ENCODE measurements at regions of chr19 and their contacts with region 1.

Region 1: GRCh38 chr19:37893845-37894575 is 12.4 kb downstream of the WDR87 start:
- DNase-seq: no peak
- ATAC-seq: no peak

Region 2: DNA sequence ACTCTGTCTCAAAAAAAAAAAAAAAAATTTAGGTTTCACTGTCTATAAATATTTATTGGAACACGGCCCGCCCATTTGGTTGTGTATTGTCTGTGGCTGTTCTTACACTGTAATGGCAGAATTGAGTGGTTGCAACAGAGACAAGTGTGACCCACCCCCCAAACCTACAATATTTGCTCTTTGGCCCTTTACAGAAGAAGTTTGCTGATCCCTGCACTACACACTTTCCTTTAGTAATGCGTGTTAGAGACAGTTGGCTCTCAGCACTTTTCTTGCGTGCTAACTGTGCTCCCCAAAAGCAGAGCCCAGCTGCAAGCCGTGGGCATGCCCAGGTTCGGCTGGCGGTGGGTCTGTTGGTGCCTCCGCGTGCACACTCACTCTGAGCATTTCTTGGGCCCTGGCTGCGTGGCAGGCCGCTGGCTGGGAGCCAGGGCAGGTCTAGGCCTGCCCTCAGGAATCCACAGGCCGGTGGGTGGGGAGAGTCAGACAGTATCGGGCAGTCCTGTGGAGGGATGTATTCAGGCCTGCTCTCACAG is 85.6 kb after region 1 on chr19:
- intact Hi-C with region 1: no loop called
- DNase-seq: no peak
- ATAC-seq: peak in 1 of 2 donors; percentile 67

Region 3: DNA sequence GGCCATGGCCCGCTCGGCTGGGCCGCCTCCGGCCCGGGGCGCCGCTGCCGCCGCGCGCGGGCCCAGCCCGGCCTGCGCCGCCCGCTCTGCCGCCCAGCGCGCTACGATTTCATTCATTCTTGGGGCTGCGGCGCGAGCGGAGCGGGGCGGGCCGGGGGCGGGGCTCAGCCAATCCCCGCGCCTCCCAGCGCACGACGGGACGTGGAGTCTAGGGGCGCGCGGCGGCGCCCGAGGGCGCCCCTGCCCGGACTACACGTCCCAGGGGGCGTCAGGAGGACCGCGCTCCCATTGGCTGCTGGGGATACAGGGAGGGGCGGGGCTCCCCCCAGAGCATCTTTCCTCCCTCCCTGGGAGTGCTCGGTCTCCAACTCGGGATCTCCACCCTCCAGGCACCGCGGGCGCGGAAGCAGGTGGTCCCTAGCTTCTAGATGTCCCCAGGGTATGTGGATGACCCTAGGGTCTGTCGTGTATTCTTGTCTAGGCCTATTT is 335.6 kb after region 1 on chr19:
- intact Hi-C with region 1: loop called (anchors 5 to 10 kb)
- DNase-seq: peak; percentile 74
- ATAC-seq: peak; percentile 87 to 91

Measured in left cardiac atrium (tissue), 4 donors.